ENCODE measurements at regions of chr6 and their contacts with region 1.

Region 1: DNA sequence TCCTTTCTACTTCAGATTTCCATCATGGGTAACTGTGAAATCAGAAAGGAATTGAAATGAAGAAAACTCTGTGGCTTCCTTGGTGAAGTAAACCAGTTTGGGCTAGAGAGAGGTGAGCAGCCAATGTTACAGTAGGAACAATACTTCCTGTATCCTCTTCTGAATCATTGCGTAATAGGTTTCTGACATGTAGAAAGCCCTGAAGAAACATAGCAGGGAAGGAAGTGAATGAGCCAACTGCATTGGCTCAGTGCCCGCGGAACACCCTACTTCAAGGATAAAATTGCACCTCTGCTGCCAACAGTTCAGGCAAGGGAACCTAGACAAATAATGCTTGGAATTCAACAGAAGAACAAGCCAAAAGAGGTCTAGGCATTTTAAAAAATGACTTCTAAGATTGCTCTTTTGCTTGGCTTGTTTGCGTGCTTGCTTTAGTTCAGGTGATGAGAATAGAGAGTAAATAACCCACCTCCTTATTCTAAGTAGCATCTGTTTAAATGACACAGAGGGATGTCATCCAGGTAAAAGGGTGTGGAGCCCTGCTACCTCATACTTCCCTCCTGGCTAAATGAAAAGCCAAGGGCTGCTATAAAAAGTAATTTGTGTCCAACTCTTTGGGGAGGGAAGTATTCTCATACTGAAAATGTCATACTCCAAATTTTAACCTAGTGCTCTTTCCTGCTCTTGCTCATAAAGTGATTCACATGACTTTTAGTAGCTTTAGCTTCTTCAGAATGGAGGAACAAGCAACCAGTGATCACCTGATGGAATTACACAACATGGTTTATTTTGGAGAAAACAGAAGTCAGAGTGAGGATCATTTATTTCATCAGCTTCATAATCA is 30.0 kb upstream of the AKIRIN2 start:
- DNase-seq: peak; percentile 52 to 68 (median 61)
- H3K4me3 ChIP-seq: no peak overlapping the region
- H3K4me3 Mint-ChIP-seq: peak overlapping the region in 7 of 8 donors; percentile 22 to 78 (median 70)
- H3K27ac ChIP-seq: no peak overlapping the region
- H3K27ac Mint-ChIP-seq: peak overlapping the region; percentile 62 to 91 (median 78)
- H3K4me1 ChIP-seq: peaks cover 27% of the 10 kb centered on the region
- H3K4me1 Mint-ChIP-seq: peaks cover 18 to 43% (median 30%) of the 10 kb centered on the region in 4 donors
- H3K27me3 ChIP-seq: no peaks in the 10 kb centered on the region
- H3K27me3 Mint-ChIP-seq: no peaks in the 10 kb centered on the region

Region 2: DNA sequence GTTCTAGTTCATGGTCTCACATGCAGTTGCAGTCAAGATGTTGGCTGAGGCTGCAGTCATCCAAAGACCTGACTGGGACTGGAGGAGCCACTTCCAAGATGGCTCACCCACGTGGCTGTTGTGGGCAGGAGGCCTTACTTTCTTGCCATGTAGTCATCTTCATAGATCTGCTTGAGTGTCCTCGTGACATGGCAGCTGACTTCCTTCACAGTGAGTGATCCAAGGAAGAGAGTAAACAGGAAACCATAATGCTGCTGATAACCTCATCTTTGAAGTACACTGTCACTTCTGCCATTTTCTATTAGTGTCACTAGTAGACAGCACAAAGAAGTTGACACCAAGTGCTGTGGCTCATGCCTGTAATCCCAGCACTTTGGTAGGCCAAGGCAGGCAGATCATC is 10.1 kb after region 1 on chr6:
- CTCF ChIA-PET with region 1: no interaction called
- POLR2A ChIA-PET with region 1: interaction called, 12 read pairs
- intact Hi-C with region 1: loop called (anchors 1 kb)
- DNase-seq: peak; percentile 63 to 83 (median 78)
- H3K4me3 ChIP-seq: no peak overlapping the region
- H3K4me3 Mint-ChIP-seq: peak overlapping the region in 7 of 8 donors; percentile 35 to 72 (median 46)
- H3K27ac ChIP-seq: no peak overlapping the region
- H3K27ac Mint-ChIP-seq: peak overlapping the region; percentile 83 to 95 (median 94)
- H3K4me1 ChIP-seq: peaks cover 49% of the 10 kb centered on the region
- H3K4me1 Mint-ChIP-seq: peaks cover 33 to 52% (median 43%) of the 10 kb centered on the region in 4 donors
- H3K27me3 ChIP-seq: no peaks in the 10 kb centered on the region
- H3K27me3 Mint-ChIP-seq: no peaks in the 10 kb centered on the region

Measured in CD4-positive, alpha-beta memory T cell (primary cell).